ENCODE measurements at regions of chr17 and their contacts with region 1.

Region 1: DNA sequence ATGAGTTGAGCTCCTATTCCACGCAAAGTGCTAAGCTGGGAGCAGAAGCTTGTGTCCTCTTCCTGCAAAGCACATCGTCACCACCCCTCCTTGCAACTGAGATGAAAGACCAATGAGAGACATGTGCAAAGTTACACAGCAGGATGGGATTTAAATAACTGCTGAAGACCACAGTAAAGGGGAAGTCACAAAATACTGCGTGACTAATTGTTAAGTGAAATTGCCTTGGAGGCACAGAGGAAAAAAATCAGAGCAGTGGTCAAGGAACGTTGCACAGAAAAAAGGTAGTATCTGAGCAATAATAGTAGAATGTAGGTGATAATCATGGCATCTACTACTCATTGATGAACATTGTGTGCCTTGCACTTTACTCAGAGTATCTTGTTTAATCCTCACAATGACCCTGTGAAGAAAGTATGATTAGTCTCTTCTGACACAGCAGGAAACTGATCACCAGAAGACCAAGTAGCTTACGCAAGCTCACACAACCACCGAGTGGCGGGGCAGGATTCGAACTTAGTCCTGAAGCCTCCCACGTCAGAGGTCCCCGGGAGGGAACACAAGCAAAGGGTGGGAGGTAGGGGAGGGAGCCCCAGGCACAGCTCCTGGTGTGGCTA is 15.4 kb upstream of the MYO18A start:
- DNase-seq: no peak
- ATAC-seq: no peak
- H3K4me3 Mint-ChIP-seq: no peak overlapping the region
- H3K27ac Mint-ChIP-seq: no peak overlapping the region
- H3K4me1 Mint-ChIP-seq: peaks cover 6% of the 10 kb centered on the region; the same call in 1 of the 2 replicates
- H3K27me3 Mint-ChIP-seq: no peaks in the 10 kb centered on the region
- CTCF ChIP-seq: no peak

Region 2: DNA sequence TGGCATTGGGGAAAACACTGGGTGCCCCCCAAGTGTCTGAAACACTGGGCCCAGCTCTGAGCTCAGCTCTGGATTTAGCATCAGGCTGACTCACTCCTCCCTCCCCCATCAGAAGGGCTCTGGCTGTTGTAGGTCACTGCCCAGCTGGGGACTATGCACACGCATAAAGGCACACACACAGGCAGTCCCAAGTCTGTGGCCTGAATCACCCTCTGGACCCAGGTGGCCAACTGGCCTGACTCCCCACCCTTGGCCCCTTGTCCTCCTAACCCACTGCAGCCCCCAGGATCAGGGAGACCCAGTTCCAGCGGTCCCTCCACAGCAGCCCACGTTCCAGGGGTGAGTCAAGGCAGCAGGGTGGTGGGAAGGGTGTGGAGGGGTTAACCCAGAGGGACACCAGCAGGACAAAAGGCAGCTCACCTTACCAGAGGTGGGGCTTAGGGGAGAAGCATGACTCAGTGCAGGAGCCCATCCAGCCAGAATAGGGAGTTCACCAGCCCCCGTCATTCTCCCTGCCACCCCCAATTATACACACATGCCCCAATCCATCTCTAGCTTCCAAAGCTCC is 62.3 kb before region 1 on chr17:
- CTCF ChIA-PET with region 1: no interaction called
- POLR2A ChIA-PET with region 1: no interaction called
- DNase-seq: no peak
- ATAC-seq: peak; percentile 83
- H3K4me3 Mint-ChIP-seq: no peak overlapping the region
- H3K27ac Mint-ChIP-seq: peak overlapping the region; percentile 30
- H3K4me1 Mint-ChIP-seq: peaks cover 27% of the 10 kb centered on the region
- H3K27me3 Mint-ChIP-seq: no peaks in the 10 kb centered on the region
- CTCF ChIP-seq: no peak

Region 3: DNA sequence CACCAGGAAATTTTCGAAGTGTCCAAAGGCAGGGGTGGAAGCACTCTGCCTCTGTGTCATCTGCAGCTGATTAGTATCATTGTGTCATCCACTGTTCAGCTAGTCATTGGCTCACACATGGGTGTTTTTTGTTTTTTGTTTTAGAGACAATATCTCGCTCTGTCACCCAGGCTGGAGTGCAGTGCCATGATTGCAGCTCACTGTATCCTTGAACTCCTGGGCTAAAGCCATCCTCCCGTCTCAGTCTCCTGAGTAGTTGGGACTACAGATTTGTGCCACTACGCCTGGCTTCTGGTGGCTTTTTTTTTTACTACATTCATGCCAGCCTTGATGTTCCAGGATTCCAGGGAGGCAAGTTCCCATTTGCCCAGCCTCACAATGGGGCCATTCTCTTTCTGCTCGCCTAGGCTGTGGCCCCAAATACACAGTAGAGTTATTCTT is 17.1 kb after region 1 on chr17:
- CTCF ChIA-PET with region 1: interaction called, 14 read pairs
- POLR2A ChIA-PET with region 1: no interaction called
- DNase-seq: no peak
- ATAC-seq: no peak
- H3K4me3 Mint-ChIP-seq: no peak overlapping the region
- H3K27ac Mint-ChIP-seq: no peak overlapping the region
- H3K4me1 Mint-ChIP-seq: peaks cover 11% of the 10 kb centered on the region
- H3K27me3 Mint-ChIP-seq: no peaks in the 10 kb centered on the region
- CTCF ChIP-seq: no peak

Region 4: DNA sequence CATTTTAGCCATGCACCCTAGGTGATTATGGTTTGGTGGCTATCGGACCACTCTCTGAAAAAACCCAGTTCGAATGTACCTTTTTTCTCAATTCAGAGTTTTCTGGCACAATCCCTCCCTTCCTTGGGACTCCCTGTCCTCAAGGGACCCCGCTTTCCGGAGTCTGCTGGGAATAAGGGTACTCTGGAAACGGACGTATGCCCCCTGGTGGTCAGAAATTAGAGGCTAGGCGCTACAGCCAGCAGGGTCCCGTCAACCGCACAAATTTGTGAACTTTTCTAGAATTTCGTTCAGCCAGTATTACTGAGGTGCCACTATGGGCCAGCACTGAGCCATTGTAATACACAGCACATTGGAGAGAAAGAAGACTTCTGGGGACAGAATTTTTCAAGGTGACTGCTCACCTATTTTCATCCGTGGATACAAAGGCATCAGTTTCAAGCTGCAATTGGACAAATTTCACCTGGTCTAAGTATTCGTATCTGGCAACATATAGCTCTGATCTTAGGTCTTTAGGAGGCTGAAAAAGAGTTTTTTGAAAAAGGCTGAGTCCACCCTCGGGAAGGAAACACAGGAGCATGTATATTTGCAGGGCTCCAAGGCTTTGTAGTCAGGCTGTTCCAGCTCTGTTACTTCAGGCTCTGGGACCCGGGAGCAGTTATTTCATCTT is 23.9 kb after region 1 on chr17:
- CTCF ChIA-PET with region 1: interaction called, 12 read pairs
- POLR2A ChIA-PET with region 1: no interaction called
- DNase-seq: peak; percentile 89
- ATAC-seq: peak; percentile 97
- H3K4me3 Mint-ChIP-seq: no peak overlapping the region
- H3K27ac Mint-ChIP-seq: no peak overlapping the region
- H3K4me1 Mint-ChIP-seq: peaks cover 6% of the 10 kb centered on the region
- H3K27me3 Mint-ChIP-seq: no peaks in the 10 kb centered on the region
- CTCF ChIP-seq: peak; percentile 82